ENCODE measurements at regions of chr9 and their contacts with region 1.

Region 1: GRCh38 chr9:82606492-82607382 is 456.2 kb downstream of the RASEF start:
- DNase-seq: no peak
- ATAC-seq: peak; percentile 85 to 87

Region 2: DNA sequence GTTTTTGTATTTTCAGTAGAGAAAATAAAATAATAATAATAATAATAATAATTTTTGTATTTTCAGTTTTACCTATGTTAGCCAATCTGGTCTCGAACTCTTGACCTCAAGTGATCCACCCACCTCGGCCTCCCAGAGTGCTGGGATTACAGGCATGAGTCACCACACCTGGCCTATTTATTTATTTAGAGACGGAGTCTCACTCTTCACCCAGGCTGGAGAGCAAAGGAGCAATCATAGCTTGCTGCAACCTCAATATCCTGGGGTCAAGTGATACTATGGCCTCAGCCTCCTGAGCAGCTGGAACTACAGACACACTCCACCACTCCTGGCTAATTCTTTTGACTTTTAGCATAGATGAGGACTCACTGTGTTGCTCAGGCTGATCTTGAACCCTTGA is 1084.8 kb before region 1 on chr9:
- intact Hi-C with region 1: loop called in 1 of 2 experiments (anchors 5 kb)
- DNase-seq: no peak
- ATAC-seq: no peak

Region 3: DNA sequence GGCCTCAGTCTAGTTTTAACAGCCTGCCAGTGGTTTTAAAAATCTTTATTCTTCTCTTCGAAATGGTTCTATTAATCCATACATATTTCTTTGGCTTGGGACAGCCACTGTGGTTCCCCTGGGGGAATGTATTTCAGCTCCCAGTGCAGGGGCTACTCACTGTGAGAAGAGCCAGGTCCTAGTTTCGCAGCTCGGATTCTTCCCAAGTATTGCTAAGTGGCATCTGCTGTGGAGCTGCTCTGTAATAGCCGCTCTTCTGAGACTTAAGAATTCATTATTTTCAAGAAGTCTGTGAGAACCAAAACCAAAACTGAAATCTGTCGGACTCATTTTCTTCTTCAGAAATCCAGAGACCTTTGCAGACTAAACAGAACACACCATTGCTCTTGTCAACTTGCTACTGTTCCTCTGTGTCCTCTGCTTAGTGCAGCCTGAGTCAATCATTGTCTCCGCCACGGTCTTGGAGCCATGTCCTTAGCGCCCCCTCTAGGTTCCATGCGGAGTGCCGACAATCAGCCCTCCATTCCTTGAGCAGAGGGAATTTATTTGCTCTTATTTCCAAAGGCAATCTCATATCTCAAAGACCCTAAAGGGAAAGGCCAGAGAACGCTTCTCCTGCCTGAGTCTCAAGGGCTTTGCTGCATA is 140.0 kb before region 1 on chr9:
- intact Hi-C with region 1: no loop called
- DNase-seq: peak; percentile 25
- ATAC-seq: peak in 1 of 2 donors; percentile 43

Region 4: DNA sequence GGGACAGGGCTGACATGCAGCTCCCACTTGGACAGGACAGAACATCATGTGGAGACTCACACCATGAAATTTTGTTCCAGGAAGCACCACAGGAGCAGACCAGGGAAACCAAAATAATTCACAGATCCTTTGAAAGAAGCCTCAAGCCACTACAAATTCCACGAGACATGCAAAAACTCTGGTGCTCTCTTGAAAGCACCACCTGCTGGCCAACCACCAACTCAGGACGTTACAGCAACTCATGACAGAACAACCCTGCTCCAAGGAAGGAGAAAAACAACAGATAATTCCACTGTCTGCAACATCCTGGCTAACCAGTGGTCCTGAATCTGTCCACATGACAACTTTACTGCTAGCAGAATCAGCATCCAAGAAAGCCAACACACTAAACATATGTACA is 102.1 kb before region 1 on chr9:
- intact Hi-C with region 1: no loop called
- DNase-seq: no peak
- ATAC-seq: no peak

Region 5: DNA sequence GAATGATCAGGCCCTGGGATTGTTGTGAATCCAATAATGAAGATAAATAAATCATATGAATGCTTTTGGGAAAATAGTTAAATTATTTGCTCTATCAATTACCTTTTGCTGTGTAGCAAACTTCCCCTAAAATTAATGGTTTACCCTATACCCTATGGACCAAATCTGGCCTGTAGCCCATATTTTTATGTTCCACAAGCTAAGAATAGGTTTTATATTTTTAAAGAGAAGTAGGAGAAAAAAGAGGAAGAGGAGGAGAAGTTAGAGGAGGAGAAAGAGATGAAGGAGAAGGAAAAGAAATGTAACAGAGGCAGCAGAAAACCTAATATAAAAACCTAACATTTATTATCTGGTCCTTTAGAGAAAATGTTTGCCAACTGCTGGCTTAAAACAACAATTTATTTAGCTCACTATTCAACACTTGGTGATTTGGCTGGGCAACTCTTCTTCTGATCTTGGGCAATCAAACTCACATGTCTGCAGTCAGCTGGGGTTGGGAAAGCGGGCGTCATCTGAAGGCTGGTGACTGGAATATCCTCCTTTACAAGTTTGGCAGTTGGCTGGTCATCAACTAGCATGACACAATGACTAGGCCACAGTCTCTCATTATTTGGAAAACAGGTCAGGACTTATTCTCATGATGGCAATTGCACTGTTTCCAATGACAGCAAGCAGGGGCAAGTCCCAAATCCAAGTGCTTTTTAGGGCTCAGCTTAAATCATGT is 66.7 kb before region 1 on chr9:
- intact Hi-C with region 1: loop called in 1 of 2 experiments (anchors 5 kb)
- DNase-seq: peak; percentile 14
- ATAC-seq: no peak

Region 6: DNA sequence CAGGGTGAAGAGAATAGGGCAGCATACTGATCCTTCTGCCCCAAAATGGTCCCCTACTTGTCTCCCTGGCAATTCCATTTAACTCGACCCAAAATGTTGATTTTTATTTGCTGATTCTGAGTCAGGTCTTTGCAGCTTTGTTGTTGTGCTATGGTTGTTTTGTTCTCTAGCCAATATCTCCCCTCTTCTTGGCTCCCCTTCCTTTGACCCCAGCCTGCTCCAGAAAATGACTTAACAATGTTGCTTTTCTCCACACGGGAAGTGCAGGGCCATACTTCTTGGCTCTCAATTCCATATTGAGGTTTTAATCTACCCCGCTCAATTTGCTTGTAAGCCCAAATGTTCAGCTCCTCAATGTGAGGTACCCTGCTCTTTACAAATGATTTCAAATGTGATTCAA is 126.2 kb after region 1 on chr9:
- intact Hi-C with region 1: no loop called
- DNase-seq: no peak
- ATAC-seq: no peak